ENCODE measurements at regions of chr6 and their contacts with region 1.

Region 1: GRCh38 chr6:31834434-31835198 is 7.1 kb downstream of the HSPA1B start:
- DNase-seq: peak; percentile 90
- H3K4me3 ChIP-seq: peak overlapping the region; percentile 76 to 91 (median 84)
- H3K27ac ChIP-seq: peak overlapping the region; percentile 93 to 99 (median 97)
- H3K4me1 ChIP-seq: peaks cover 27 to 79% (median 62%) of the 10 kb centered on the region in 4 donors
- H3K27me3 ChIP-seq: no peaks in the 10 kb centered on the region
- CTCF ChIP-seq: no peak
- EP300 ChIP-seq: peak; percentile 12
- POLR2A ChIP-seq: peak; percentile 78

Region 2: GRCh38 chr6:30006170-30007131 is 1828.2 kb before region 1 on chr6:
- in situ Hi-C with region 1: no loop called
- intact Hi-C with region 1: no loop called
- DNase-seq: peak; percentile 20
- H3K4me3 ChIP-seq: peak overlapping the region; percentile 30 to 63 (median 48)
- H3K27ac ChIP-seq: peak overlapping the region in 2 of 4 donors; percentile 8 to 31
- H3K4me1 ChIP-seq: peaks cover 8 to 22% (median 17%) of the 10 kb centered on the region in 4 donors
- H3K27me3 ChIP-seq: peaks cover 25% of the 10 kb centered on the region
- CTCF ChIP-seq: no peak
- EP300 ChIP-seq: no peak
- POLR2A ChIP-seq: no peak

Region 3: DNA sequence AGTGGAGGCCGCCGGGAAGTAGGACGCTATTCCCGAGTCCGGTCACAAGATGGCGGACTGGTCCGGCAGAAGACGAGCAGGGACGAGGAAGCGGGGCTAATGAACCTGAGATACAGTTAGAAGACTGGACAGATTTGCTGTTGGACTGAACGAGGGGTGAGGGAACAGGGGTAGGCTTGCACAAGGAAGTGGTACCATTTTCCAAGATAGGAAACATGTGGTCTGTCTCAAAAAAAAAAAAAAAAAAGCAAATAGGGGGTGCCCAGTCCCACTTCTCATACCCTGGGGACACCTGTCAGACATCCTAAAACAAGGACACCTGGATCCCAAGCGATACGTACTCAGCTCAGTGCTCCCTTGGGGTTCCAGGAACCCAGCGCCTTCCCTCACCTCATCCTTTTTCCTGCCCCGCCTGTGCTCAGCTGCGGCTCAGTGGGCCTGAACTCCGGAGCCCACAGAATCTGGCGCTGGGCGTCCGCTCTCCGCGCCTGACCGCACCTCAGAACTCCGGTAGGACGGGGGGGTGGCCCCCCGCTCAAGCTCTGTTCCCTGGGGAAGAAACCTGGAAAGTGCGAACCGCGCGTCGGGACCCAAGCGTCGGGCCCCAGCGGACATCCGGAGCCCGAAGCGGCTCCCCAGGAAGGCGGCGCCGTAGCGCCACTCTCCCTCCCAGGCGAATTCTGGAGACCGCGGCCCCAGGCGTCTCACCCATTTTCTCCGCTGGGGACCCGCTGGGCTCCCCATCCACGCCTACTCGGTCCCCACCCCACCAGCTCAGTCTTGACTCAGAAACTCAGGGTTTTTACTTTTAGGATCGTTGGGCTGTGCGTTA is 153.6 kb before region 1 on chr6 and contains the start of gene LY6G5C:
- in situ Hi-C with region 1: no loop called
- intact Hi-C with region 1: loop called (anchors 10 kb)
- DNase-seq: peak; percentile 89
- H3K4me3 ChIP-seq: peak within 1 kb of the TSS; percentile 42 to 63 (median 43)
- H3K27ac ChIP-seq: peak within 1 kb of the TSS; percentile 70 to 85 (median 78)
- H3K4me1 ChIP-seq: peaks cover 5 to 26% (median 11%) of the 10 kb centered on the region in 4 donors
- H3K27me3 ChIP-seq: no peaks in the 10 kb centered on the region
- CTCF ChIP-seq: peak; percentile 52 to 78 (median 69)
- EP300 ChIP-seq: no peak
- POLR2A ChIP-seq: peak; percentile 31
- total RNA-seq, gene LY6G5C: 0.95 to 2.2 TPM in 2 of 4 donors, not detected in the others

Region 4: DNA sequence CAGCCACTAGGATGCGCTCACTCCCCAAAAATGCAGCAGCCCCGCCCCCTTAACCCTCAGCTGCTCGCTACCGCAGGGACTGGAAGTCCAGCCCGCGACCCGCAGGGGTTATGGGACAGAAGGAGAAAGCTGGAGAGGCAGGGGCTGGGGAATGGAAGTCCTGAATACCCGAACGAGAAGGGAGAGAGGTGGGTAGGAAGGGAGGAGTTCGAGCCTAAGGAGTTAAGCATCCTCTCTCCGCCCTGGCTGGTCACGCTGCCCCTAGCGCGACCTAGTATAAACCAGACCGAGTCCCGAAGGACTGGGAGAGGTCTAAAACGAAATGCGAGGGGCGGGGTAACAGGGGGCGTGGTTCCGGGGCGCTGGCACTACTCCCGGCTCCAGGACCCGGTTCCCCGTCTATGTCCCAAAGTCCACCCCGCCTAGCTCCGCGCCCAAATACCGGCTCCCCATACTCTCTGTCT is 105.1 kb before region 1 on chr6:
- in situ Hi-C with region 1: loop called in 1 of 4 experiments (anchors 10 kb)
- intact Hi-C with region 1: loop called (anchors 5 kb)
- DNase-seq: peak; percentile 97
- H3K4me3 ChIP-seq: peak overlapping the region; percentile 58 to 79 (median 73)
- H3K27ac ChIP-seq: peak overlapping the region; percentile 94 to 99 (median 96)
- H3K4me1 ChIP-seq: peaks cover 23 to 69% (median 45%) of the 10 kb centered on the region in 4 donors
- H3K27me3 ChIP-seq: no peaks in the 10 kb centered on the region
- CTCF ChIP-seq: peak in 2 of 5 experiments; percentile 46 to 74
- EP300 ChIP-seq: no peak
- POLR2A ChIP-seq: peak; percentile 79

Measured in transverse colon (tissue), 4 donors.